Activated T-helper 2 cell treated with anti-CD3 and anti-CD28 coated beads, Interferon-gamma antibody, Interleukin-2, Interleukin-4, amounts not matched to agents 10 μg/mL and 5 μg/mL and 100 μg/mL, durations not matched to agents 14 hours and 24 hours and 36 hours (primary cell): ENCODE measurements at regions of chr18 and their contacts with region 1.

Region 1: DNA sequence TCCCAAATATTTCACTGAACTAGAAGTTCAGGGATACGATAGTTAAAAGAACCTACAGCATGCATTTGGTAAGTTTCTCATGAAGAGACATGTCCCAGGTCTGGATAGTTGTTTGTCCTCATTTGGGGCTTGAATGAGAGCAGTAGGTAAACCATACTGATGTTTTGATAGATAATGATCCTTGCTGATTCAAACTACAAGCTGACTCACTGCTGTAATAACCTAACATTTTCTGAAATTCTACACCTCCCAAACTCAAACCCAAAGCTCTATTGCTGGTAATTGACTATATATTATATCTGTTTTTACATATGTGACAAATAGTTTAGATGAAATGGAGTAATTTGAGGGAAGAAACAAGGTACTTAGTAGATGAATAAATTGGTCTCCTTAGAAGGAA is 154.1 kb upstream of the BOD1L2 start:
- DNase-seq: no peak
- H3K4me3 Mint-ChIP-seq: no peak overlapping the region
- H3K27ac Mint-ChIP-seq: no peak overlapping the region
- H3K4me1 Mint-ChIP-seq: peaks cover 26% of the 10 kb centered on the region
- H3K27me3 Mint-ChIP-seq: no peaks in the 10 kb centered on the region

Region 2: GRCh38 chr18:57004366-57005121 is 11.8 kb after region 1 on chr18:
- intact Hi-C with region 1: loop called (anchors 1 kb)
- DNase-seq: no peak
- H3K4me3 Mint-ChIP-seq: peak overlapping the region; percentile 23
- H3K27ac Mint-ChIP-seq: peak overlapping the region; percentile 49
- H3K4me1 Mint-ChIP-seq: peaks cover 34% of the 10 kb centered on the region
- H3K27me3 Mint-ChIP-seq: no peaks in the 10 kb centered on the region